ENCODE measurements at regions of chr2 and their contacts with region 1.

Region 1: GRCh38 chr2:96856776-96857673 is 791 bp downstream of the ANKRD39 start:
- H3K4me3 Mint-ChIP-seq: peak overlapping the region; percentile 97
- H3K27ac Mint-ChIP-seq: peak overlapping the region; percentile 85
- H3K4me1 Mint-ChIP-seq: peaks cover 43% of the 10 kb centered on the region
- H3K27me3 Mint-ChIP-seq: peaks cover 34% of the 10 kb centered on the region

Region 2: DNA sequence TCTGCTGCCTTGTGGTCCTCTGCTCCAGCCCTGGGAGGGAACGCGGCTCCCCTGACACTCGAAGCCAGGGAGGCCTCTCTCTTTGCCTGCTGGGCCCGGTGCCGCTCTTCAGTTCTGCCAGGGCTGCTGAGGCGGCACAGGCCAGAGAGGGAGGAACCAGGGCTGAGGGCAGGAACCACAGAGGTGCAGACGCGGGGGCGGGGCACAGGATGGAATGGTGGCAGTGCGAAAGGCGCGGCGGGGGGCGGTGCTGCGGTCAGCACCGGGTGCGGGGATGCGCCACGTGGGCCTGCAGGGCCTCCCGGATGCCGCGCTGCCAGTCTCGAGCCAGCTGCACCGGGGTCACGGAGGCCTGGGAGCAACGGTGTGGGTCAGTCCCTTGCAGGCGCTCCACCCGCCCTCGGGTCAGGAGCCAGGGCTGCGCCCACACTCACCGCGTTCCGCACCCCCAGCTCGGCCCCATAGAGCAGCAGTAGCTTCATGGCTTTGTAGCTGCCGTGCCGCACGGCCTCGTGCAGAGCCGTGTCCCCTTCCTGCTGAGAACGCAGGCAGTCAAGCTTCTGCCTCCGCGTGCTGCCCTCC is 17.6 kb before region 1 on chr2:
- intact Hi-C with region 1: no loop called
- H3K4me3 Mint-ChIP-seq: peak overlapping the region; percentile 33
- H3K27ac Mint-ChIP-seq: no peak overlapping the region
- H3K4me1 Mint-ChIP-seq: peaks cover 19% of the 10 kb centered on the region
- H3K27me3 Mint-ChIP-seq: peaks cover 4% of the 10 kb centered on the region

Region 3: GRCh38 chr2:96951093-96951654 is 94.1 kb after region 1 on chr2:
- intact Hi-C with region 1: loop called (anchors 1 kb)
- H3K4me3 Mint-ChIP-seq: no peak overlapping the region
- H3K27ac Mint-ChIP-seq: no peak overlapping the region
- H3K4me1 Mint-ChIP-seq: peaks cover 13% of the 10 kb centered on the region
- H3K27me3 Mint-ChIP-seq: peaks cover 60% of the 10 kb centered on the region

Measured in dendritic cell treated with granulocyte-macrophage colony-stimulating factor and Interleukin-4, amounts not matched to agents 40 ng/mL and 50 ng/mL, for 4 days (primary cell).